ENCODE measurements at regions of chr20 and their contacts with region 1.

Region 1: GRCh38 chr20:8043687-8044282 is 24.2 kb upstream of the TMX4 start:
- DNase-seq: peak; percentile 18
- ATAC-seq: peak; percentile 72
- H3K4me3 Mint-ChIP-seq: no peak overlapping the region
- H3K27ac Mint-ChIP-seq: no peak overlapping the region
- H3K4me1 Mint-ChIP-seq: peaks cover 1% of the 10 kb centered on the region
- H3K27me3 Mint-ChIP-seq: peaks cover 9% of the 10 kb centered on the region

Region 2: DNA sequence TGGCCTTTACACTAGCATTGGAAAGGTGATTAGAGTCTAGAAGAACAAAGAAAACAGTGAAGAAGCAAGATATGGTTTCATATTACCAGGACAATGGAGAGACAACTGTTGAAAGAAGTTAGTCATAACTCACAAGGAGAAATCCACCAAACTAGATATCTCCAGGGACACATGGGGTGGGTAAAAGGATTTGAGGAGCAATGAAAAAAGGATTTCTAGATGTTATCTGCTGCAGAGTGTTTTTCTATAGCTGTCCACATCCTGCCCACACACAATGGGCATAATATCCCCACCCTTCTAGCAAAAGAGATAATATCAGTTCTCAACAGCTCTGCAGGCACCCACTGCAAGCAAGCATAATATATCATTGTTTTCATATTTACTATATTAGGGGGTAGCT is 406.6 kb before region 1 on chr20:
- CTCF ChIA-PET with region 1: no interaction called
- POLR2A ChIA-PET with region 1: no interaction called
- intact Hi-C with region 1: no loop called
- DNase-seq: no peak
- ATAC-seq: no peak
- H3K4me3 Mint-ChIP-seq: no peak overlapping the region
- H3K27ac Mint-ChIP-seq: no peak overlapping the region
- H3K4me1 Mint-ChIP-seq: no peaks in the 10 kb centered on the region
- H3K27me3 Mint-ChIP-seq: no peaks in the 10 kb centered on the region

Region 3: DNA sequence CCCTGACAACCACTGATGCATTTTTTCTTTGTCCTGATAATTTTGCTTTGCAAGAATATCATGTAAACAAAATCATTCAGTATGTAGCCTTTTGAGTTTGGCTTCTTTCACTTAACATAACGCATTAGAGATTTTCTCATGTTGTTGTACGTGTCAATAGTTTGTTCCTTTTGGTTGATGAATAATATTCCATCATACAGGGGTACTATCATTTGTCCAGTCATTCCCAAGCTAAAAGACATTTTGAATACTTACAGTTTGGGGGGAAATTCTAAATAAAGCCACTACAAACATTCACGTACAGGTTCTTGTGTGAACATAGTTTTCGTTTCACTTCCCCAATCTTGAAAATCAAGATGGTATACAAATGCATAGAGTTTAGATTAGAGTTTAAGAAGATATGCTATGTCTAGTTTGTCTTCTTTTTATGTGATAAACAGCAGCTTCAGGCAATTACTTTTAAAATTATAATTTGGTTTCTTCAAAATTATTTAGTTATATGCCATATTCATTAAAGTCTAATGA is 108.7 kb before region 1 on chr20:
- CTCF ChIA-PET with region 1: no interaction called
- POLR2A ChIA-PET with region 1: no interaction called
- intact Hi-C with region 1: loop called in 1 of 2 experiments (anchors 5 kb)
- DNase-seq: no peak
- ATAC-seq: no peak
- H3K4me3 Mint-ChIP-seq: no peak overlapping the region
- H3K27ac Mint-ChIP-seq: no peak overlapping the region
- H3K4me1 Mint-ChIP-seq: no peaks in the 10 kb centered on the region
- H3K27me3 Mint-ChIP-seq: peaks cover 22% of the 10 kb centered on the region

Region 4: DNA sequence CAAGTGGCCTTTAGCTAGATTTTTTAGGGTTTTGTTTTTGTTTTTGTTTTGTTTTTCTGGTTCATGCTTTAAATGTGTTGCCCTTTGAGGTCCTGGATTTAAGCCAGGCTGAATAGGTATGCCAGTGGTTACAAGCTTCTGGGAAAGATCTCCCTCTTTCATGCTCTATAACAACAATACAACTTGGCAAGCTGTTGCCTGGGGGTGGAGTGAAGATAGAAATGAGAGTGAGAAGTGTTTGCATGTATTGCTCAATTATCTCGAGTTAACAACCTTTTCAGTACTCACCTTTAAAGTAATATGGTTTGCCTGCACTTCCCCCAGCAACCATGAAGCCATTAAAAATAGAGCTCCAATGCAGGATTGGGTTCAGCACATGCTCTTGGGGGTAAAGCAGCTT is 84.3 kb before region 1 on chr20:
- CTCF ChIA-PET with region 1: no interaction called
- POLR2A ChIA-PET with region 1: no interaction called
- intact Hi-C with region 1: no loop called
- DNase-seq: no peak
- ATAC-seq: no peak
- H3K4me3 Mint-ChIP-seq: no peak overlapping the region
- H3K27ac Mint-ChIP-seq: no peak overlapping the region
- H3K4me1 Mint-ChIP-seq: no peaks in the 10 kb centered on the region
- H3K27me3 Mint-ChIP-seq: peaks cover 23% of the 10 kb centered on the region

Region 5: DNA sequence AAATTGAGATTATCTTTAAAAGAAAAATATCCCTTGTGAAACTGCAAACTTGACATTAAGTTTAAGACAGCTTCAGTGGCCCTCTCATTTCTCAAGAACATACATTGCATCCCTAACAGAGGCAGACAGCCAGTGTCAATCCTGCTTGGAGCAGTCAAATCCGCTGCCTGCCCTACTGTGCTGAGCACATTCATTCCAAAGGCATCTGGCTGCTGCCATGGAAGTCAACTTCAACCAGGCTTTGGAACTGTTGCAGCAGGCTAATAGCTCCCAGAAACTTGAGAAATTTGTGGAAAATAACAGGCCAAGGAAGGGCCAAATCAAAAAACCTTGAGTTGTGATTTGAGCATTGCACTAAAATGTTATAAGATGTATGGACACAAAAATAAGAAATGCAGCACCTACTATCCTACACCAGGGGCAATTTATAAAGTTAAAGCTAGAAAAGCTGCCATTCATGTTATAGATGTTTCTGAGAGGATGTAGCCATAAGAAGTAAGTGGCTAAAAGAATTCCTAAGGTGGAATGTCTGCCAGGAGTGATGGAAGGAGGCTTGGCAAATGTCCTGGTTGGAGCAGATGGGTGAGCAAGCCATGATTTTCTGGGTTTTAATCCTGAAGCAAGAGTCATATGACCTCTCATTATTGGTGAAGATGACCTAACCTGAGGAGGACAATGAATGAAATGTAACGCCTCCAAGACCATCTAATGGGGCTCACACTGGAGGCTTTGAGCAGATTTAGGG is 72.1 kb before region 1 on chr20:
- CTCF ChIA-PET with region 1: no interaction called
- POLR2A ChIA-PET with region 1: no interaction called
- intact Hi-C with region 1: loop called in 1 of 2 experiments (anchors 10 kb)
- DNase-seq: no peak
- ATAC-seq: no peak
- H3K4me3 Mint-ChIP-seq: no peak overlapping the region
- H3K27ac Mint-ChIP-seq: no peak overlapping the region
- H3K4me1 Mint-ChIP-seq: no peaks in the 10 kb centered on the region
- H3K27me3 Mint-ChIP-seq: peaks cover 5% of the 10 kb centered on the region

Region 6: DNA sequence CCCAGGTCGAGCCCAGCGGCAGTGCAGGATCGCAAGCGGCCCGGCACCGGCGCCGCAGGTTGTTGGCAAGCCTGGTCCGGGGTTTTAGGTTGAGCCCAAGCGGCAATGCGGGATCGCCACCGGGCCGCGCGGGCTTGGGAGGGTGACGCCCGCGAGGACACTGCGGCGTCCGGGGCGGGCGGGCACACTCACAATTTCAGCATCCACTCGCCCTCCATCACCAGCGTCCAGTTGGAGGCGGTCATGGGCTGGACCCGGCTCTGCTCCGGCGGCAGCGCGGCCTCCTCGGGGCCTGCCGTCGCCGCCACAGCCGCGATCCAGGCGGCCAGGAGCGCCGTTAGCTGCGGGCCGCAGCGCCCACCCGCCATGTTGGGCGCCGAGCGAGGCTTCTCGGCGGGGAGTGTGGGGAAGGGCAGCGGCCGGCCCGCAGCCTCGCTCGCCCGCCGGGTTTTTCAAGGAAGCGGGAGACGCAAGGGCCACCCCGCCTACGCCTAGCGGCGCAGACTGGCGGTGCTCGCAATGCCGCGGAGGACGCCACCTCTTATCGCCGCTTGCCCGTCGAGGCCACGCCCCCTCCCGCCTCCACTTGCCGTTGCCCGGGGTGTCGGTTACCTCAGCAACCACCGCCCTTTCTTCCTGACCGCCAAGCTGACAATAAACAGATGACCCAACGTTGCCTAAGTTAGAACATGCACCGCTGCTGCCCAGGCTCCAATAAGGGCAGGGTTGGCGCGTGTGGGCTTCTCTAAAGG is 24.4 kb before region 1 on chr20 and contains the start of gene TMX4:
- CTCF ChIA-PET with region 1: interaction called, 17 read pairs
- POLR2A ChIA-PET with region 1: no interaction called
- intact Hi-C with region 1: no loop called
- DNase-seq: peak; percentile 94
- ATAC-seq: peak; percentile 84
- H3K4me3 Mint-ChIP-seq: peak within 1 kb of the TSS; percentile 85
- H3K27ac Mint-ChIP-seq: peak within 1 kb of the TSS; percentile 75
- H3K4me1 Mint-ChIP-seq: peaks cover 24% of the 10 kb centered on the region
- H3K27me3 Mint-ChIP-seq: no peaks in the 10 kb centered on the region
- total RNA-seq, gene TMX4: 19.2 to 25.9 TPM

Region 7: GRCh38 chr20:8033151-8033841 is 10.5 kb before region 1 on chr20:
- CTCF ChIA-PET with region 1: interaction called, 13 read pairs
- POLR2A ChIA-PET with region 1: no interaction called
- intact Hi-C with region 1: no loop called
- DNase-seq: no peak
- ATAC-seq: no peak
- H3K4me3 Mint-ChIP-seq: no peak overlapping the region
- H3K27ac Mint-ChIP-seq: no peak overlapping the region
- H3K4me1 Mint-ChIP-seq: no peaks in the 10 kb centered on the region
- H3K27me3 Mint-ChIP-seq: no peaks in the 10 kb centered on the region

Region 8: GRCh38 chr20:8305449-8305978 is 261.7 kb after region 1 on chr20:
- CTCF ChIA-PET with region 1: interaction called, 3 read pairs
- POLR2A ChIA-PET with region 1: no interaction called
- intact Hi-C with region 1: loop called (anchors 1 to 10 kb)
- DNase-seq: peak; percentile 85
- ATAC-seq: peak; percentile 88
- H3K4me3 Mint-ChIP-seq: no peak overlapping the region
- H3K27ac Mint-ChIP-seq: no peak overlapping the region
- H3K4me1 Mint-ChIP-seq: peaks cover 6% of the 10 kb centered on the region
- H3K27me3 Mint-ChIP-seq: peaks cover 2% of the 10 kb centered on the region

Region 9: GRCh38 chr20:8315639-8316573 is 272.1 kb after region 1 on chr20:
- CTCF ChIA-PET with region 1: no interaction called
- POLR2A ChIA-PET with region 1: no interaction called
- intact Hi-C with region 1: no loop called
- DNase-seq: no peak
- ATAC-seq: no peak
- H3K4me3 Mint-ChIP-seq: no peak overlapping the region
- H3K27ac Mint-ChIP-seq: no peak overlapping the region
- H3K4me1 Mint-ChIP-seq: no peaks in the 10 kb centered on the region
- H3K27me3 Mint-ChIP-seq: no peaks in the 10 kb centered on the region

Region 10: GRCh38 chr20:8389381-8390036 is 345.7 kb after region 1 on chr20:
- CTCF ChIA-PET with region 1: interaction called, 42 read pairs
- POLR2A ChIA-PET with region 1: no interaction called
- intact Hi-C with region 1: loop called (anchors 1 to 2 kb)
- DNase-seq: no peak
- ATAC-seq: no peak
- H3K4me3 Mint-ChIP-seq: no peak overlapping the region
- H3K27ac Mint-ChIP-seq: no peak overlapping the region
- H3K4me1 Mint-ChIP-seq: no peaks in the 10 kb centered on the region
- H3K27me3 Mint-ChIP-seq: peaks cover 2% of the 10 kb centered on the region

Measured in activated CD4-positive, alpha-beta T cell treated with anti-CD3 and anti-CD28 coated beads for 36 hours (primary cell).